Right ventricle myocardium inferior (tissue), 1 donor: ENCODE measurements at regions of chr7 and their contacts with region 1.

Region 1: DNA sequence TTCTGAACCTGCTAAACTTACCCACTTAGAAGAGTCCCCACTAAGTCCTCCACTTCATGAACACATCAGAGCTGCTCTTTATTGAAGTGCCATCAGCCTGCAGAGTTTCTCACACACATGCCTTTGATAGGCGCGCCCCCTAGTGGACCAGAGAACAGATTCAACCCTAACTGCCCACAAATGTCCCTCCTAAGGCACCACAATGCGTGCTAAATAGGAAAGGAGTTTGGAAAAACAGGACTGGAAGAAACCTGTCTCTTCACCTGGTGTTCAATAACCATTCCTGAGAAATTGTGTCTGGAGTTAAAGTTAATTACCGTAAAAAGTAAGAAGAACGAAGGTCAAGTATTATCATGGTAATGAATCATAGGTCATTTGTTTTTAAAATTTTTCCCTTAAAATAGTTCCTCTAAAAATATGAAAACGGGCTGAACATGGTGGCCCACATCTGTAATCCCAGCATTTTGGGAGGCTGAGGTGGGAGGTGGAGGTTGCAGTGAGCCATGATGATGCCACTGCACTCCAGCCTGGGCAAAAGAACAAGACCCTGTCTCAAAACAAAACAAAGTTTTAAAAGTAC is 249.7 kb downstream of the ELMO1 start:
- DNase-seq: peak; percentile 86
- ATAC-seq: peak; percentile 70

Region 2: DNA sequence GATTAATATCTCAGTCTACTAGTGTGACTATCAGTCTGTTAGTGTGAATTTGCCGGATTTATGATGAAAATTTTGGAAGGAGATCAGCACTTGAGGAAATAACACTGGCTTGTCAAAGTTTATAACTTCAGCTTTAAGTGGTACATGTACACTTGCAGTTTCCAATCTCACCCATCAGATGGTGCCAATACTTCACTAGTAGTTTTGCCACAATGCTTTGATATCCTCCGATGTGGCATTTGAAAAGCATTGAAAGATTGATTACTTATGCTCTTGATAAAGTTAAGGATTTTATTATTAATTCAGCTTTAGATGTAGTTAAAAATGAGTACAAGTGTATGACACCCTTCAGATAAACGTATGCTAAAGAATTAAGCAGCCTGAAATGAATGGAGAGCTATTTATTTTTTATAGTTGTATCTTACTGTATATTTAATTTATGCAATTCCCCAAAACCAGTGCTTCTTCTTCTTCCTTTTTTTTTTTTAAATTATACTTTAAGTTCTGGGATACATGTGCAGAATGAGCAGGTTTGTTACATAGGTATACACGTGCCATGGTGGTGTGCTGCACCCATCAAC is 711.1 kb before region 1 on chr7:
- intact Hi-C with region 1: loop called (anchors 1 kb)
- DNase-seq: no peak
- ATAC-seq: no peak

Region 3: DNA sequence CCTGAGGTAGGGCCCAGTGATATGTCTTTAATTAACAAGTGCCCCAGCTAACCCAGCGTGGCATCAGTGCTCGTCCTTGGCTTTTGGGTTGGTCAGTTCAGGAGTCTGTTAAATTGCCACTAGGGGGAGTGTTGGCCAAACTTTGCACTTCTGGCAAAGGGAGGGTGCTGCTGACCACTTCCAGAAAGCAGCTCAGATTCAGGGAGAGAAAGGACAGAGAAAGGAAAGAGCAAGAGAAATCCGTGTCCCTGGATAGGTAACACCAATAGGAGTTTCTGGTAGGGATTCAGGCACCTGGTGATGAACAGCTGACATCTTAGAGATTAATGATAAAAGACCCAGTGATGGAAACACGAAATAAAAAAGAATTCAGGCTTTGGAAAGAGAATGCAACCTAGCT is 231.6 kb before region 1 on chr7:
- intact Hi-C with region 1: loop called (anchors 5 kb)
- DNase-seq: no peak
- ATAC-seq: peak; percentile 94

Region 4: GRCh38 chr7:36986429-36987362 is 212.3 kb before region 1 on chr7:
- intact Hi-C with region 1: loop called (anchors 1 kb)
- DNase-seq: no peak
- ATAC-seq: peak; percentile 64

Region 5: GRCh38 chr7:37287131-37287855 is 88.3 kb after region 1 on chr7:
- intact Hi-C with region 1: no loop called
- DNase-seq: no peak
- ATAC-seq: no peak